GM23248 (cell line): ENCODE measurements at regions of chr1 and their contacts with region 1.

Region 1: DNA sequence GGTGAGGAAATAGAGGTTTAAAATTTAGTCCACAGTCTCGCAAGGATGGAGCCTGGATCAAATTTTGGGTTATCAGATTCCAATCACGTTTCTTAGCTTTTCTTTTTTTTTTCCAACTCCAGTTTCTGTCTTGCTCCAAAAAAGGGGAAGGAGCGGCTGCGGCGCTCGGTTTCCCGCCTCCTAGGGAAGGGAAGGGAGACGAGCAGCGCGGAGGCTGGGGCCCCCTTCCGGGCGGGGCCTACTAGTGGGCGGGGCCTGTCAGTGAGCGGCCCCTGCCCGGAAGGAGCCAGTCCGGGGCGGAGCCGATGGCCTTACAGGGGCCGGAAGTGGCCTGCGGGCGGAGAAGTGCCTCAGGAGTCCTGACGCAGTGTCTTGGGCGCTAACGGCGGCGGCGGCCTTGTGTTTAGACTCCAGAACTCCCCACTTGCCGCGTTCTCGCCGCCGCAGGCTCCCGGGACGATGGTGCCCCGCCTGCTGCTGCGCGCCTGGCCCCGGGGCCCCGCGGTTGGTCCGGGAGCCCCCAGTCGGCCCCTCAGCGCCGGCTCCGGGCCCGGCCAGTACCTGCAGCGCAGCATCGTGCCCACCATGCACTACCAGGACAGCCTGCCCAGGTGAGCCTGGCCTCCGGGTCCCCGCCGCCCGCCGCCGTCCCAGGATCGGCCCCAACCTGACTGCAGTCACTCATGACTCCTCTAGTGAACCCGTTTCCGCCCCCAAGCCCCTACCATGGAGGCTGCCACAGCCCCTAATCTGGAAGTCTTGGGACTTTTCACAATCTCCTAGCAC is at the start of gene CPT2:
- DNase-seq: peak; percentile 98
- H3K4me3 ChIP-seq: peak within 1 kb of the TSS; percentile 88
- H3K27ac ChIP-seq: peak within 1 kb of the TSS; percentile 87
- H3K4me1 ChIP-seq: peaks cover 30% of the 10 kb centered on the region
- H3K27me3 ChIP-seq: no peaks in the 10 kb centered on the region
- total RNA-seq, gene CPT2: 16.2 and 24.5 TPM in 2 replicates

Region 2: DNA sequence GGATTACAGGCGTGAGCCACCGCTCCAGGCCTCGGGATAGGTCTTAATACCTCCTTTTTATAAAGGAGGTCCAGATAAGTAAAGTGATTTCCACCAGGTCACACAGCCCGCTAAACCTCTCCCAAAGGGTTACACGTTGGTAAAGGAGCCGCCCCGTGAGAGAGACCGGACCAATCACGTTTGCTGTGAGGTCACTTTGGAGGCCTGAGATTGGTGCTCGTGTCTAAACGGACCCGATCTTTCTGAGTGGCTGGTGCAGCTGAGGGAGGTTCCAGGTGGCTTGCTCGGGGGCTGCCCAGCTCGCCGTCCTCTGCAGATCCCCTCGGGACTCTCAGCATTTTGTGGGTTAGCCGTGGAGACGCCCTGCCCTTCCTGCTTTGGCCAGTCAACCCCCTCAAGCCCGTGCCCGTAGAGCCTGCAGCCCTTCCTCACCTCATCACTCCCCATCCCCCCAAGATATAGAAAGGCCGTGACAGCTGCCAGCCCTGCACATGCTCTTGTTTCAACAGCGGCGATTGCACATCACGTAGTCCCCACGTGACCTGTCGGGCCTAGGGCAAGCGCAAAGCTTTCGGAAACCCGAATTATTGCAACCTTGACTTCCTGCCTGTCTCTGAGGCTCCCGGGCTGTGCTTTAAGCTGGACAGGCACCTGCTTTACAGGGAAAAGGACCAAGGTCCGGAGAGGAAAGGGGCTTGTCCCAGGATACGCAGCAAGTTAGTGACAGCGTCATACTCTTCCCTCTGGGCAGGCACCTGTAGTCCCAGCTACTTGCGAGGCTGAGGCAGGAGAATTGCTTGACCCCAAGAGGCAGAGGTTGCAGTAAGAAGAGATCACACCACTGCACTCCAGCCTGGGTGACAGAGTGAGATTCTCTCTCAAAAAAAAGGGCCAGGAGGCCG is 493.5 kb before region 1 on chr1:
- in situ Hi-C with region 1: loop called (anchors 25 kb)
- DNase-seq: peak; percentile 94
- H3K4me3 ChIP-seq: peak overlapping the region; percentile 72
- H3K27ac ChIP-seq: no peak overlapping the region; the same call in 1 of the 2 replicates
- H3K4me1 ChIP-seq: peaks cover 8% of the 10 kb centered on the region
- H3K27me3 ChIP-seq: no peaks in the 10 kb centered on the region

Region 3: DNA sequence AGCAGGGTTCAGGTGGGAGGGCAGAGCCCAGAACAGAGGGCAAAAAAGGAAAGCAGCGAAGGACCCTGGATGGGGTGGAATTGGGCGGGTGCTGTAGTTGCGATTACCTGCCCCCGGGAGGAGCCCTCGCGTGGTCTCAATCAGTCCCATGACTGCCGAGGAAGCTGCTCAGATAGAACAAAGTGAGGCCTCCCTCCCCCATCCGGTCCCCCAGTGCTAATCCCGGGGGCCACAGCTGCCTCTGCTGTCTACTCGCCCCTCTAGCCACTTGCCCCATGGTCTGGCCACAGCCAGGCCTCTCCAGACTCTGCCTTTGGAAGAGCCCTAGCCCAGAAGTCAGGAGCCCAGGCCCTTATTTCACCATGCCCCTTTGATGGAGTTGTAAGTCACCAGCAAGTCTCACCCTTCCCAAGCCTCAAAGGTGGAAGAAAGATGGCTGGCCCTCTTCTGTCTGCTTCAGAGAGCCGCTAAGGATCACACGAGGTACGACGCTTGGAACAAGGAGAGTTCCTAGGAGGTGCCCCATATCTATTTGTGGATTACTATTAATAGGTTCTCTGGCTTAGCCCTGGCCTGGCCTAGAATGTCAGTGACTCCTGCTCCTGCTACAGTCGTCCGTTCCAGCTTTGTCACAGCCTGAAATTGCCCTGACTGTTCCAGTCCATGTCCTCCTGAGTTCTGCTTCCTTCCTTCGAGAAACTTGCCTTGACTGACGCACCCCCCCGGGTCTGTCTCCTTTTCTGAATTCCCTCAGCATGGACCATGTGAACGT is 291.6 kb before region 1 on chr1:
- in situ Hi-C with region 1: loop called (anchors 10 kb)
- DNase-seq: peak; percentile 57
- H3K4me3 ChIP-seq: no peak overlapping the region
- H3K27ac ChIP-seq: no peak overlapping the region
- H3K4me1 ChIP-seq: no peaks in the 10 kb centered on the region
- H3K27me3 ChIP-seq: no peaks in the 10 kb centered on the region

Region 4: GRCh38 chr1:53419034-53419433 is 222.4 kb after region 1 on chr1:
- in situ Hi-C with region 1: no loop called
- DNase-seq: no peak
- H3K4me3 ChIP-seq: no peak overlapping the region
- H3K27ac ChIP-seq: no peak overlapping the region
- H3K4me1 ChIP-seq: peaks cover 1% of the 10 kb centered on the region; the same call in 1 of the 2 replicates
- H3K27me3 ChIP-seq: peaks cover 68% of the 10 kb centered on the region